ENCODE measurements at regions of chr6 and their contacts with region 1.

Region 1: DNA sequence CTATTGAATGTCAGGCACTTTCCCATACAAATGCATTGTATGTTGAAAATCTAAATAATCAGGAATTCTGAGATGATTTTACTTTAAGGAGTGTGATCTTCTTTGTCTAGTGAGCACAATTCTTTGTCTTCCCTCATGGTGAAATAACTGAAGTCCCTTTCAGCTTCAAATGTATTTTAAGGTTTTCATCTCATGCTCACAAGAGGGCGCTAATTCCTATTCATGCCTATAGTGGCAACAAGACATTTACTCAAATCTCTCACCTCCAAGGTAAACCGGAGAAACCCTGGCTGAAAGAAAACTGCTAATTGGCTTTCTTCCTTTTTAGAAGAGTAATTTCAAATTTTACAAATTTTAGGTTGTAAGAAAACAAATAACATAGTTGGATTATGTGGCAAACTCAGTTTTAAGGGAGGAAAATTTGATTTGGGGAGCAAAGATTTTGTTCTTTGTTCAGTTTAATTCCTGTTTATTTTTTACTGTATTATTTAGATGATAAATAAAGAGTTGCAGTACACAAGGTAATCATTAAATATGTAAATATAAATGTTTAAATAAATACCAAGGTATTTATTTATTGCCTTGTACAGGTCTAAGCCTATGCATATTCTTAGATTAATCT is 69.1 kb downstream of the SLC35F1 start:
- DNase-seq: peak in 1 of 2 experiments; percentile 53
- H3K4me3 ChIP-seq: no peak overlapping the region
- H3K4me3 Mint-ChIP-seq: no peak overlapping the region
- H3K27ac Mint-ChIP-seq: no peak overlapping the region
- H3K4me1 ChIP-seq: no peaks in the 10 kb centered on the region
- H3K4me1 Mint-ChIP-seq: no peaks in the 10 kb centered on the region
- H3K27me3 ChIP-seq: no peaks in the 10 kb centered on the region
- H3K27me3 Mint-ChIP-seq: no peaks in the 10 kb centered on the region
- CTCF ChIP-seq: peak in 1 of 2 experiments; percentile 67

Region 2: GRCh38 chr6:118263921-118264486 is 287.9 kb after region 1 on chr6:
- CTCF ChIA-PET with region 1: no interaction called
- POLR2A ChIA-PET with region 1: no interaction called
- intact Hi-C with region 1: loop called (anchors 1 kb)
- DNase-seq: peak in 1 of 2 experiments; percentile 17
- H3K4me3 ChIP-seq: no peak overlapping the region
- H3K4me3 Mint-ChIP-seq: no peak overlapping the region
- H3K27ac Mint-ChIP-seq: no peak overlapping the region
- H3K4me1 ChIP-seq: no peaks in the 10 kb centered on the region
- H3K4me1 Mint-ChIP-seq: no peaks in the 10 kb centered on the region
- H3K27me3 ChIP-seq: no peaks in the 10 kb centered on the region
- H3K27me3 Mint-ChIP-seq: peaks cover 3% of the 10 kb centered on the region
- CTCF ChIP-seq: peak in 1 of 2 experiments; percentile 39

Region 3: GRCh38 chr6:118509009-118509617 is 533.0 kb after region 1 on chr6:
- CTCF ChIA-PET with region 1: no interaction called
- POLR2A ChIA-PET with region 1: no interaction called
- intact Hi-C with region 1: loop called (anchors 2 kb)
- DNase-seq: peak in 1 of 2 experiments; percentile 10
- H3K4me3 ChIP-seq: no peak overlapping the region
- H3K4me3 Mint-ChIP-seq: no peak overlapping the region
- H3K27ac Mint-ChIP-seq: no peak overlapping the region
- H3K4me1 ChIP-seq: no peaks in the 10 kb centered on the region
- H3K4me1 Mint-ChIP-seq: no peaks in the 10 kb centered on the region
- H3K27me3 ChIP-seq: no peaks in the 10 kb centered on the region
- H3K27me3 Mint-ChIP-seq: no peaks in the 10 kb centered on the region
- CTCF ChIP-seq: peak; percentile 45 to 71

Region 4: DNA sequence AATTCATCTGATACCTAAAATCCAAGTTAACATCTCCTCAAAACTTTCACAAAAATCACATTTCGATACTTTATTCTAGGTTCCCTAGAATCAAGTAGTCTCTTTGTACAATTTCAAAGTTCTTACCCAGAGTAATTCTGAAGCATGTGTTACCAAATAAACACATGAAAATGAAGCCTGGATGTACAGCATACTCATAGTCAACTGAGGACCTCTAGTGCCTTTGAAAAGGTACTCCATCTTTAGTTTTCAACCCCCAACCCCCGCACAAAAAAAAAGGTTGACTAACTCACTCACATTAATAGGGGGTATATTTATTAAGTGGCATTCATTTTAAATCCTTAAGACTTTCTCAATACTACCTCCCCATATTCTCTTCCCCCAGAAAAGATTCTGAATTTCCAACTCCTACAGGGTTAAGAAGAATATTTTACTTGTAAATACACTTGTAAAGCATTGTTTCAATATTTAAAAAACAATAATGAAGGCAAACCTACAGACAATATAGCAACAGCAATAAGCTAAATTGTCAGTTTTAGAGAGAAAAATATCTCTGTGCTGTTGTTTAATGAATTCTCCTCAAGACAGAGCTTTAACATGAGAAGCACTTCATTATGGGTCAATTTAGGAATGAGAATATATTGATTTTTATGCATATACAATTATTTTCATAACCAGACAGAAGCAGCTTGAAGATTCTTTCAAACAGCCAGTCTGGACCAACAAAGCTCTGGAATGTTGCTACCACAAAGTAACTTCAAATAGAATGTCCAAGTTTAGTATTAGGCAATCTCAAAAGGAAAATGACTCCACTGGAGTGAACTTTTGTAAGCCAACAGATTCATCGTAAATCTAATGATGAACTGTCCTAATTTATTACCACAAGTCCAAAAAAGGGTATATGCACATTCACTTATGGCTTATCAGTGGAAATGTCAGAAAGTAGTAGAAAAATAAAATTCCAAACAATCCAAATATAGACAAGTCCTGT is 575.2 kb after region 1 on chr6:
- CTCF ChIA-PET with region 1: no interaction called
- POLR2A ChIA-PET with region 1: no interaction called
- intact Hi-C with region 1: loop called (anchors 1 kb)
- DNase-seq: peak in 1 of 2 experiments; percentile 12
- H3K4me3 ChIP-seq: no peak overlapping the region
- H3K4me3 Mint-ChIP-seq: no peak overlapping the region
- H3K27ac Mint-ChIP-seq: no peak overlapping the region
- H3K4me1 ChIP-seq: no peaks in the 10 kb centered on the region
- H3K4me1 Mint-ChIP-seq: no peaks in the 10 kb centered on the region
- H3K27me3 ChIP-seq: no peaks in the 10 kb centered on the region
- H3K27me3 Mint-ChIP-seq: peaks cover 3% of the 10 kb centered on the region
- CTCF ChIP-seq: peak; percentile 35 to 59

Region 5: GRCh38 chr6:118580585-118581419 is 604.7 kb after region 1 on chr6:
- CTCF ChIA-PET with region 1: no interaction called
- POLR2A ChIA-PET with region 1: no interaction called
- intact Hi-C with region 1: loop called (anchors 1 kb)
- DNase-seq: peak; percentile 39 to 50
- H3K4me3 ChIP-seq: no peak overlapping the region
- H3K4me3 Mint-ChIP-seq: no peak overlapping the region
- H3K27ac Mint-ChIP-seq: no peak overlapping the region
- H3K4me1 ChIP-seq: no peaks in the 10 kb centered on the region
- H3K4me1 Mint-ChIP-seq: no peaks in the 10 kb centered on the region
- H3K27me3 ChIP-seq: no peaks in the 10 kb centered on the region
- H3K27me3 Mint-ChIP-seq: no peaks in the 10 kb centered on the region
- CTCF ChIP-seq: peak; percentile 54 to 62

Measured in Caco-2 (cell line).